ENCODE measurements at regions of chr14 and their contacts with region 1.

Region 1: DNA sequence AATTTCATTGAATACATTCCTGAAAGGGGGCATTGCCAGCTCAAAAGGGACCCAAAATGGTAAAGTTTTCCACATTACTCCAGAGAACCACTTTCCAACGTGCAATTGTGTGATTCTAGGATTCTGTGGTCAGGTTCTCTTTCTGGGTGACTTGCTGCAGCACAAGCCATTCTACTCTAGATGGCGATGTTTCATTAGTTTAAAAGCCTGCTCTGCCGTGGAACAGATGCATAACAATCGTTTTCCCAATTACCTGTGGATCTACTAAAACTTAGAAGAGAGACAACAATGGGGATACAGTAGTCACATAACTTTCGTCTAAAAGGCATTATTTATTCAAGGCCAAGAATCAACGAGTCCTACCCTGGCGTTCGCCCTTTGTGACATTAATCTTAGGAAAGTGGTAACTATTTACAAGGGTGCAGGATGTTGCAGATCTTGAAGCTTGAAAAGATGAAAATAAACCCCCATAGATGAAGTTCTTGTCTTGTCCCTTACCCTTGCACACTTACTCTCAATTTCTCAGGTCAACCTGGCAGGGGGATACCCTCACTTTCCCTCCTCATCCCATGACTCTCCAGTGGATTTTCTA is 400.9 kb downstream of the SNAPC1 start:
- DNase-seq: no peak
- ATAC-seq: peak in 1 of 4 donors; percentile 54
- H3K4me3 ChIP-seq: no peak overlapping the region
- H3K27ac ChIP-seq: no peak overlapping the region
- H3K4me1 ChIP-seq: no peaks in the 10 kb centered on the region
- H3K27me3 ChIP-seq: no peaks in the 10 kb centered on the region
- CTCF ChIP-seq: peak; percentile 59

Region 2: GRCh38 chr14:62179367-62180018 is 16.4 kb after region 1 on chr14:
- intact Hi-C with region 1: no loop called
- DNase-seq: no peak
- ATAC-seq: peak; percentile 37 to 69 (median 50)
- H3K4me3 ChIP-seq: no peak overlapping the region
- H3K27ac ChIP-seq: no peak overlapping the region
- H3K4me1 ChIP-seq: no peaks in the 10 kb centered on the region
- H3K27me3 ChIP-seq: no peaks in the 10 kb centered on the region
- CTCF ChIP-seq: peak; percentile 32

Region 3: DNA sequence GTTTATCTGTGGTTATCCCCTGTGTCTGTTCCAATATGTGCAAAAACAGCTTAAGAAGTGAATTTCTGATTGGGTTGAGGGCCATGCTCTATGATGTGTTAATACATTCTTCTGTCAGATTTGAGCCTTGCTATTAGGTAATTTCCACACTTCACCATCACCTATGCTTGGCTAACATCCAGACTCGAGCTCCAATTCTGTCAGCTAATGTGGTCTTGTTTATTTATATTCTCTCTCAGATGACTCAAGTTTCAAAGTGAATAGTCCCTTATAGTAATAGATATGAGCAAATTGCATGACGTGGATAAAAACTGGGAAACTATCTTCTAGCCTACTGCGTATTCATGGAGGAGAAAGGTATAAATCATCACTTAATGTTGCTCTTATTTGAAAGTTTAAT is 50.4 kb after region 1 on chr14:
- intact Hi-C with region 1: no loop called
- DNase-seq: no peak
- ATAC-seq: no peak
- H3K4me3 ChIP-seq: no peak overlapping the region
- H3K27ac ChIP-seq: no peak overlapping the region
- H3K4me1 ChIP-seq: no peaks in the 10 kb centered on the region
- H3K27me3 ChIP-seq: no peaks in the 10 kb centered on the region
- CTCF ChIP-seq: no peak

Region 4: DNA sequence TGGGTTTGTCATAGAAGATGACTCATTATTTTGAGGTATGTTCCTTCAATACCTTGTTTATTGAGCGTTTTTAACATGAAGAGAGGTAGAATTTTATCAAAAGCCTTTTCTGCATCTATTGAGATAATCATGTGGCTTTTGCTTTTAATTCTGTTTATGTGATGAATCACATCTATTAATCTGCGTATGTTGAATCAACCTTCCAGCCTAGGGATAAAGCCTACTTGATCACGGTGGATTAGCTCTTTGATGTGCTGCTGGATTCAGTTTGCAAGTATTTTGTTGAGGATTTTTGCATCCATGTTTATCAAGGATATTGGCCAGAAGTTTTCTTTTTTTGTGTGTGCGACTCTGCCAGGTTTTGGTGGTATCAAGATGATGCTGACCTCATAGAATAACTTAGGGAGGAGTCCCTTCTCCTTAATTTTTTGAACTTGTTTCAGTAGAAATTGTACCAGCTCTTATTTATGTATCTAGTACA is 201.7 kb after region 1 on chr14:
- intact Hi-C with region 1: no loop called
- DNase-seq: no peak
- ATAC-seq: no peak
- H3K4me3 ChIP-seq: no peak overlapping the region
- H3K27ac ChIP-seq: no peak overlapping the region
- H3K4me1 ChIP-seq: no peaks in the 10 kb centered on the region
- H3K27me3 ChIP-seq: no peaks in the 10 kb centered on the region
- CTCF ChIP-seq: no peak

Region 5: DNA sequence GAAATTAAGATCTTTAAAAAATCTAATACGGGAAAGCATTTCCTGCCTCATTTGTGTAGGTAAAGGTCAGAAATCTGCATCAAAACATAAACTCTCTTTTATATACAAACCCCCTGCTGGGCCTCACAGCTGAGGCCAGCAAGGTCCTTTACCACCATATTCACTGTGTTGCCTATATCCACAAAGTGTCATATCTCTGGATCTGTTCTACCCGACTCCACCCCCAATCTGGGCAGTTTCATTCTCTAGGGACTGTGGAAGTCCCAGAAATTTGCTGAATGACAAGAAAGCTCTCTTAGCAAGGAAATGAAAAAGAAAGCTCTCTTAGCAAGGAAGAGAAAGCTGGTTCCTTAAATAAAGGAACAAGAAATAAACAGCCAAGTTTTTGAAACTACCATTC is 580.5 kb after region 1 on chr14:
- intact Hi-C with region 1: no loop called
- DNase-seq: no peak
- ATAC-seq: no peak
- H3K4me3 ChIP-seq: no peak overlapping the region
- H3K27ac ChIP-seq: no peak overlapping the region
- H3K4me1 ChIP-seq: no peaks in the 10 kb centered on the region
- H3K27me3 ChIP-seq: no peaks in the 10 kb centered on the region
- CTCF ChIP-seq: no peak

Region 6: DNA sequence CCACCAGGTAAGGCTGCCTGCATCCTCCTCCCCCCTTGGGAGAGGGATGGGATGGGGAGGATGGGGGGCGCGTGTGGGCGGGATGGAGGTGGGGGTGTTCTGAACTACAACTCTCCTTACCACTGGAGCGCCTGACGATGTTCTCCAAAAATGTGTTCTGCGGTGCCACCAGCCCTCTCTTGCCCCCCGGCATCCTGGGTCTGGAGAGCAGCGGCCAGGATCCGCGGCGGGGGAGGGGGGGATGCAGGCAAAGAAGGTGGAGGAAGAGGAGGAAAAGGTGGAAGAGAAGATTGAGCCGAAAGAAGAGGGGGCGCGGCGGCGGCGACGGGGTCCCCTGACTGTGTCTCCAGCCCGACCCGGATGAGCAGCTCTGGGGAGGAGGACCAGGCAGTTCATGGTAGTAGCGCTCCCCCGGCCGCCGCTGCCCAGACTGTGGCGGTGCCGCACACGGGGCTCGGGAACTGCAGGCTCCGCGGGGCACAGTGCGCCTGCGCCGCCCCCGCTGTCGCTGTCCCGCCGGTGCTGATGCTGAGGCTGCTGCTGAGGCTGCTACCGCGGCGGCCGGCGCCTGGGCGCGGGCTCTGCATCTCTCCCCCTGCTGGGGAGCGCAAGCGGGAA is 882.0 kb after region 1 on chr14 and contains the start of gene KCNH5:
- intact Hi-C with region 1: loop called in 1 of 2 experiments (anchors 10 kb)
- DNase-seq: peak; percentile 17 to 52
- ATAC-seq: peak in 2 of 4 donors; percentile 42 to 62
- H3K4me3 ChIP-seq: peak within 1 kb of the TSS; percentile 45
- H3K27ac ChIP-seq: no peak within 1 kb of the TSS
- H3K4me1 ChIP-seq: no peaks in the 10 kb centered on the region
- H3K27me3 ChIP-seq: peaks cover 4 to 55% (median 13%) of the 10 kb centered on the region in 3 donors
- CTCF ChIP-seq: no peak
- total RNA-seq, gene KCNH5: not detected

Region 7: GRCh38 chr14:63276492-63277342 is 1113.6 kb after region 1 on chr14:
- intact Hi-C with region 1: loop called (anchors 5 to 10 kb)
- DNase-seq: no peak
- ATAC-seq: peak in 1 of 4 donors; percentile 69
- H3K4me3 ChIP-seq: no peak overlapping the region
- H3K27ac ChIP-seq: no peak overlapping the region
- H3K4me1 ChIP-seq: no peaks in the 10 kb centered on the region
- H3K27me3 ChIP-seq: peaks cover 0 to under 1% (median 0%) of the 10 kb centered on the region in 3 donors
- CTCF ChIP-seq: peak; percentile 71

Region 8: DNA sequence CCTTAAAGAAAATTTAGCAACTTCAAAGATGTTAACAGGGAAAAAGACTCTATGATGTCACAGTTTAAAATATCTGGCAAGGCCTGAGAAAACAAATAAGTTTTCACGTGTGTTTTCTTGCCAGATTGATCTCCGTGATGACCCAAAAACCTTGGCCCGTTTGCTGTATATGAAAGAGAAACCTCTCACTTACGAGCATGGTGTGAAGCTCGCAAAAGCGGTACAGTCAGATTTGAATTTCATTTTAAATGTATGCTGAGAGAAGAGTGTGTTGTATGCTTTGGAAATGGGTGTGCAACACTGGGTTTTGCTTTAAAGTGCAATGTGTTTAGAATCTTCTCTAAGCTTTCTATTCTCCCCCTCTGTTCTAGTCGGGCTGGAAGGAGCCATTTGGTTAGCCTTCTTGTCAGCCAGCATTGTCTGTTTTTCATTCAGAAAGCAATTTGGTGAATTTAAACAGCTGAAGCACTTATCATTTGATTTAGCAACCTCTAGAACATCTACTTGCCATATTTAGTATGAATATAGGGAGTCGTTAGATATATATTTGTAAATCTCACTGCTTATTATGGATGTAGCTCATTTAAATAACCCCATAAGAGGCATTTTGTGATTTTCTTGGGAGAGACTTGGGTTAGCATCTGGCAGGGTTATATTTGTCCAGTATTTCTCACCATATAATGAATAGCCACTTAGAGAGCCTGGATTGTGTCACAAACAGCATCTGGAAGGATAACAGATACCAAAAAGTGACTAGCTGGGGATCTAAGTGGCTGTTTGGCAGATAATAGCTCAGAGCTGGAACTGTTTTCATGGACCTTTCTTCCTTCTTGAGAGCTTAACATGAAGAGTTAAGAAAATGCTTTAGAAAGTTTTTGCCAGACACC is 1120.1 kb after region 1 on chr14:
- intact Hi-C with region 1: loop called (anchors 5 to 10 kb)
- DNase-seq: no peak
- ATAC-seq: no peak
- H3K4me3 ChIP-seq: no peak overlapping the region
- H3K27ac ChIP-seq: no peak overlapping the region
- H3K4me1 ChIP-seq: no peaks in the 10 kb centered on the region
- H3K27me3 ChIP-seq: no peaks in the 10 kb centered on the region
- CTCF ChIP-seq: no peak